ENCODE measurements at regions of chr2 and their contacts with region 1.

Region 1: GRCh38 chr2:132623096-132623839 is 46.7 kb downstream of the LYPD1 start:
- DNase-seq: no peak
- H3K4me3 ChIP-seq: no peak overlapping the region
- H3K27ac ChIP-seq: no peak overlapping the region
- H3K4me1 ChIP-seq: no peaks in the 10 kb centered on the region
- H3K27me3 ChIP-seq: no peaks in the 10 kb centered on the region
- CTCF ChIP-seq: no peak
- EP300 ChIP-seq: no peak
- POLR2A ChIP-seq: no peak

Region 2: GRCh38 chr2:132690664-132691303 is 67.5 kb after region 1 on chr2:
- intact Hi-C with region 1: loop called in 1 of 4 experiments (anchors 2 kb)
- DNase-seq: no peak
- H3K4me3 ChIP-seq: no peak overlapping the region
- H3K27ac ChIP-seq: no peak overlapping the region
- H3K4me1 ChIP-seq: no peaks in the 10 kb centered on the region
- H3K27me3 ChIP-seq: no peaks in the 10 kb centered on the region
- CTCF ChIP-seq: no peak
- EP300 ChIP-seq: no peak
- POLR2A ChIP-seq: no peak

Region 3: DNA sequence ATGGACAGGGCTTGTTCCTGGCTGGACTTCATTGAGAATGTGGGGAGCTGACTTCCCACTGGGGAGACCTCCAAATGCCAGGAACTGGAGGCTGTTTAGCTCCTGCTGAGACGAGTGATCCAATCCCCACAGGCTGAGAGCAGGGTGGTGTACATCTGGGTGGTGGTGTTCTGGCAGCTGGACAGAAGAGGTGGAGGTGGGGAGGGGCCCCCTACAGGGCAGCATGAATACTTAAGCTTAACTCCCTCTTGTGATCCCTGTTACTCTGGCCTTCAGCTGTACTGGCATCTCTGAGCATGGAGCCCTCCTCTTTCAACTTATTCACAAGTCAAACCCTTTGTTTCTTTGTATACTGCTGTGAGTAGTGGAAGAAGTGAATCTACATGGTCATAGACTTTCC is 214.5 kb after region 1 on chr2:
- intact Hi-C with region 1: no loop called
- DNase-seq: no peak
- H3K4me3 ChIP-seq: no peak overlapping the region
- H3K27ac ChIP-seq: no peak overlapping the region
- H3K4me1 ChIP-seq: no peaks in the 10 kb centered on the region
- H3K27me3 ChIP-seq: no peaks in the 10 kb centered on the region
- CTCF ChIP-seq: no peak
- EP300 ChIP-seq: no peak
- POLR2A ChIP-seq: no peak